ENCODE measurements at regions of chrX and their contacts with region 1.

Region 1: GRCh38 chrX:19909761-19910160 is 22.4 kb upstream of the SH3KBP1 start:
- DNase-seq: no peak
- ATAC-seq: no peak
- H3K4me3 ChIP-seq: no peak overlapping the region
- H3K27ac ChIP-seq: no peak overlapping the region
- H3K4me1 ChIP-seq: peaks cover 0 to 8% of the 10 kb centered on the region in 2 donors
- H3K27me3 ChIP-seq: no peaks in the 10 kb centered on the region
- CTCF ChIP-seq: no peak

Region 2: GRCh38 chrX:19514791-19515614 is 394.8 kb before region 1 on chrX and contains the start of gene MAP3K15:
- intact Hi-C with region 1: no loop called
- DNase-seq: peak in 2 of 4 donors; percentile 33 to 82
- ATAC-seq: peak; percentile 66
- H3K4me3 ChIP-seq: peak within 1 kb of the TSS in 1 of 2 donors; percentile 36
- H3K27ac ChIP-seq: no peak within 1 kb of the TSS
- H3K4me1 ChIP-seq: peaks cover 0 to 8% of the 10 kb centered on the region in 2 donors
- H3K27me3 ChIP-seq: peaks cover 7 to 27% of the 10 kb centered on the region in 2 donors
- CTCF ChIP-seq: no peak
- polyA plus RNA-seq, gene MAP3K15: 1.4 to 2.0 (median 1.7) TPM

Region 3: DNA sequence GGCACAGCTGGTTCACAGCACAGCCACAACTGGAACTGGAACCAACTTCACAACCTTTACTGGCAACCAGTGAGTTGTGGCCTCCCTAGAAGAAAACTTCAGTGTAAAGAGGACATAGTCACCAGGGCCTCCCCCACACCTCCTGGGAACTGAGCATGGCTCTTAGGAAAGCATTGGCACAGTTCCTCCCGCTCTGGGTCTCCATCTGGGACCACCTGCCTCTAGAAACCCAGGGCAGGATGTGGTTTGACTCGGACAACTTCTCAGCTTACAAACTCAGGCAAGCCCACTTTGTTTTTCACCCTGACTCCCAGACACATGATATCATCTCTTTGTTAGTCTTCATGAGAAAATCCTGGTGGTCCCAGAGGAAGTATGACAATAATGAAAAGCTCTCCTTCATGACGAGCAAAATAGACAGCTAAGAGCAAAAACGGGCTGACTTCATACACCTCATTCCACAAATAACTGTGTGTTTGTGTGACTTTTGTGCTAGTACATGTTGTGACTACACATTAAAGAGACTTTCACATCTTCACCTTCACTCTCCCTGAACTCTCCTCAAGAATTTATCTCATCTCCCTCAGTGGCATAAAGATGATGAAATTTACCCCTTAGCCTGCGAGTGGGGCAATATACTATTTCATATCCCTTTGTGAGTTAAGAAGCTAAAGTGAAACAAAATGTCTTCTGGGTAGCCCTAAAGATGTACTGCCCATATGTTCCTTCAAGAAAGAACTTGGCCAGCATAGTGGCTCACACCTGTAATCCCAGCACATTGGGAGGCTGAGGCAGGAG is 97.8 kb before region 1 on chrX:
- intact Hi-C with region 1: no loop called
- DNase-seq: peak in 1 of 4 donors; percentile 36
- ATAC-seq: no peak
- H3K4me3 ChIP-seq: no peak overlapping the region
- H3K27ac ChIP-seq: peak overlapping the region in 1 of 2 donors; percentile 45
- H3K4me1 ChIP-seq: peaks cover 0 to 19% of the 10 kb centered on the region in 2 donors
- H3K27me3 ChIP-seq: no peaks in the 10 kb centered on the region
- CTCF ChIP-seq: no peak

Region 4: GRCh38 chrX:20128670-20129069 is 218.9 kb after region 1 on chrX:
- intact Hi-C with region 1: loop called in 1 of 2 experiments (anchors 10 kb)
- DNase-seq: no peak
- ATAC-seq: no peak
- H3K4me3 ChIP-seq: no peak overlapping the region
- H3K27ac ChIP-seq: no peak overlapping the region
- H3K4me1 ChIP-seq: no peaks in the 10 kb centered on the region
- H3K27me3 ChIP-seq: no peaks in the 10 kb centered on the region
- CTCF ChIP-seq: no peak

Measured in left lung (tissue), 14 donors.